GM12878 (cell line): ENCODE measurements at regions of chr17 and their contacts with region 1.

Region 1: DNA sequence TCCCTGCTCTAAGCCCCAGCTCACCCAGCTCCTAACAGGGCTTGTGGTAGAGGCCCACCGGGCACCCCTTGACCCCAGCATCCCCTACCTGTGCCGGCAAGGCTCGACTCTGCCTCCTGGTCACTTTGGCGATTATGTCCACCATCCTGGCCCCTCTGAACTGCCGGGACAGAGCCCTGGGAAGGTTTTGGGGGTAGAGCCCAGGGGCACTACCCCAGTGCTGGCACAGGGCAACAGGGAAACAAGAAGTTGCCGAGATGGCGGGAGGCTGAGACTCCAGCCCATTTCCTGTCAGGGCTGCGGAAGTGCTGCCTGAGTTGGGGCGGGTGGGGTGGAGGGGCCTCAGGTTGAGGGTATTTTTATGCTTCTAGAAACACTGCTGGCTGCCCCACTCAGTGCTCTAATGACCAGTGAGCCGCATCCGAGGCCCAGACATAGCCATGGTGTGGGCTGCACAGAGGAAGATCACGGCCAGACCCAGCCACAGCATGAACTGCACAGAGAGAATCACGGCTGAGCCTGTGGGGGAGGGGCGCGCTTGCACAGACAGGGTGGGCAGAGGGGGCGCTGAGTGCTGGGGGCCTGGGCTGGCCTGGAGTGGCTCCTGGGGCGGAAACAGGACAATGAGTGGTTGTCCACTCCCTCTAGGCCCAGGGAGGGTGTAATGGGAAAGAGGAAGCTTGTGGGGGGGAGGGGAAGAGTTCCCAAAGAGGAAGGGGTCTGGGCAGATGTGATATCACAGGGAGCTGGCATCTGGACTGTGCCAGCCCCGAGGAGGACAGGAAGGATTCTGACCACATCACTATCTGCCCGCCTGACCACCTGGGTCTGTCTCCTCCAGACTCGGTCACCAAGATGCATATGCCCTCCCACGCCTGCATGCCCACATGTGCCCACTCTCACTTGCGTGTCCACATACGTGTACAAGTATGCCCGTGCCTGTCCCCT is 22.3 kb downstream of the ARHGAP27 start:
- DNase-seq: no peak
- ATAC-seq: peak; percentile 73
- H3K4me3 ChIP-seq: peak overlapping the region; percentile 89
- H3K27ac ChIP-seq: peak overlapping the region; percentile 92
- H3K4me1 ChIP-seq: peaks cover 48% of the 10 kb centered on the region
- H3K27me3 ChIP-seq: no peaks in the 10 kb centered on the region
- CTCF ChIP-seq: no peak
- EP300 ChIP-seq: no peak
- POLR2A ChIP-seq: peak; percentile 77
- RAD21 ChIP-seq: no peak

Region 2: GRCh38 chr17:45394913-45395568 is 15.4 kb before region 1 on chr17:
- CTCF ChIA-PET with region 1: interaction called, 40 read pairs
- POLR2A ChIA-PET with region 1: interaction called, 5 read pairs
- RAD21 ChIA-PET with region 1: interaction called, 8 read pairs
- SMC1A ChIA-PET with region 1: interaction called, 6 read pairs
- in situ Hi-C with region 1: no loop called
- intact Hi-C with region 1: no loop called
- DNase-seq: no peak
- ATAC-seq: peak; percentile 80
- H3K4me3 ChIP-seq: no peak overlapping the region
- H3K27ac ChIP-seq: no peak overlapping the region
- H3K4me1 ChIP-seq: no peaks in the 10 kb centered on the region
- H3K27me3 ChIP-seq: no peaks in the 10 kb centered on the region
- CTCF ChIP-seq: peak; percentile 54 to 70 (median 58); a peak in 5 of 6 replicates
- EP300 ChIP-seq: no peak
- POLR2A ChIP-seq: 0 out of 2 replicates have a peak, but pooled peaks have one; percentile 14
- RAD21 ChIP-seq: peak; percentile 79

Region 3: GRCh38 chr17:45841883-45842525 is 431.6 kb after region 1 on chr17:
- CTCF ChIA-PET with region 1: no interaction called
- POLR2A ChIA-PET with region 1: no interaction called
- RAD21 ChIA-PET with region 1: no interaction called
- SMC1A ChIA-PET with region 1: no interaction called
- in situ Hi-C with region 1: loop called (anchors 25 kb)
- intact Hi-C with region 1: no loop called
- DNase-seq: no peak
- ATAC-seq: no peak
- H3K4me3 ChIP-seq: no peak overlapping the region
- H3K27ac ChIP-seq: no peak overlapping the region
- H3K4me1 ChIP-seq: no peaks in the 10 kb centered on the region
- H3K27me3 ChIP-seq: no peaks in the 10 kb centered on the region; a peak in 3 of 4 replicates
- CTCF ChIP-seq: no peak
- EP300 ChIP-seq: no peak
- POLR2A ChIP-seq: no peak
- RAD21 ChIP-seq: no peak